A673 (cell line): ENCODE measurements at regions of chr5 and their contacts with region 1.

Region 1: DNA sequence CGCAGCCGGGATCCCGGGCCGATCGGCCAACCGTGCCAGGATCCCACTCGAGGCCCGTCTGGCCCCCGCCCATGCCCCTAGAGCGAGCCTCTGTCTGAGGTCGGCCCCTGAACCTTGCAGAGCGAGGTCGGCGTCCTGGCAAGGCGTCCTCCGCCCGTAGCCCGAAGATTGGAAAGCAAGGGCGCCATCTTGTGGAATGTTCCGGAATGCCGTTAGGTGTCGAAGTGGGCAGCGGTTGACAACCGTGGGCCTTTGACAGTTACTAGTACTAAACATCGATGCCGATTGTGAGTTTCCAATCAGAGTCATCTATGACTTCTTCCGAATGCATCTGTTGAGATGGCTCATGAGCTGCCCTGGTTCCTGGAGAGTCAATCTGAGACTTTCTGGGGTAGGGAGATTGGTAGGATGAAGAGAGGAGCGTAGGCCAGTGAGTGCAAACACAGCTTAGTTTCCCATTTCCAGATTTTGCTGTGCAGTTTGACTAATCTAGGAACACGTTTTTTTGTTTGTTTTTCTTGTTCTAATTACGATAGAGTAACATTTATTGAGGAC is 923 bp upstream of the PLK2 start:
- DNase-seq: peak; percentile 86
- H3K4me3 ChIP-seq: peak overlapping the region; percentile 54
- H3K27ac ChIP-seq: peak overlapping the region; percentile 38
- H3K4me1 ChIP-seq: peaks cover 8% of the 10 kb centered on the region
- H3K27me3 ChIP-seq: peaks cover 24% of the 10 kb centered on the region
- CTCF ChIP-seq: peak; percentile 83

Region 2: DNA sequence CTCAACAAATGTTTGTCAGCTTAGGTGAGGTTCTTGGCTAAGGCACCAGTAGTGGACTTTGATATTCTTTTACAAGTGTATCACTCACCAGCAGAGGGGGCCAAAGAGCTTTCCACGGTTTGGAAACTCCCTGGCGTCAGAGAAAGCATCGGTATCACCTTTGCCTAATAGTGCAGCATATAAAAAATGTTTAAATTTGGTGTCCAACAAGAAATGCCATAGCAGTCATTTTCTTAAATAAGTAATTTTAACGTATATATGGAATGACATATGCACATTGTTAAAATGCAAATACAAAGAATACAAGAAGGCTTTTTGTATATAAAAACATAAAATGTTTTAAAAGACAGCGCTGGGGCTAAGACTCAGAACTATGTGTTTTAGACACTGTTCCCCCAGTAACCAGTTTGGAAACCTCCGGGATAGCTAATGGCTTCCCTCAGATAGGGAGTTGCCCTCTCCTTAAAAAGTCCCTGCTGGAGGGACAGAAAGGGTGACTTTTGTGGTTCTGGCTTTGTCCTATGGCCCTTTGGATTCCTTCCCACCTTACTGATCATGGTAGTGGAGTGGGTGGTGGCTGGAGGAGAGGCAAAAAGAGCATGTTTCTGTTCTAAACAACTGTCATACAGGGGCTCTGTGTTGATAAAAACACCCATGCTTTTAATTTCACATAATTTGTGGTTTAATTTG is 1162.4 kb before region 1 on chr5:
- CTCF ChIA-PET with region 1: interaction called, 6 read pairs
- POLR2A ChIA-PET with region 1: no interaction called
- intact Hi-C with region 1: loop called (anchors 1 kb)
- DNase-seq: peak; percentile 84
- H3K4me3 ChIP-seq: no peak overlapping the region
- H3K27ac ChIP-seq: no peak overlapping the region
- H3K4me1 ChIP-seq: peaks cover 6% of the 10 kb centered on the region
- H3K27me3 ChIP-seq: no peaks in the 10 kb centered on the region
- CTCF ChIP-seq: peak; percentile 79

Region 3: GRCh38 chr5:57499262-57500050 is 961.4 kb before region 1 on chr5:
- CTCF ChIA-PET with region 1: interaction called, 3 read pairs
- POLR2A ChIA-PET with region 1: no interaction called
- intact Hi-C with region 1: loop called (anchors 2 kb)
- DNase-seq: peak; percentile 59
- H3K4me3 ChIP-seq: peak overlapping the region; percentile 19
- H3K27ac ChIP-seq: no peak overlapping the region
- H3K4me1 ChIP-seq: peaks cover 20% of the 10 kb centered on the region
- H3K27me3 ChIP-seq: no peaks in the 10 kb centered on the region
- CTCF ChIP-seq: peak; percentile 76

Region 4: GRCh38 chr5:57650360-57651069 is 810.3 kb before region 1 on chr5:
- CTCF ChIA-PET with region 1: interaction called, 4 read pairs
- POLR2A ChIA-PET with region 1: no interaction called
- intact Hi-C with region 1: loop called (anchors 5 kb)
- DNase-seq: peak; percentile 61
- H3K4me3 ChIP-seq: no peak overlapping the region
- H3K27ac ChIP-seq: no peak overlapping the region
- H3K4me1 ChIP-seq: no peaks in the 10 kb centered on the region
- H3K27me3 ChIP-seq: no peaks in the 10 kb centered on the region
- CTCF ChIP-seq: peak; percentile 81

Region 5: GRCh38 chr5:57887851-57888621 is 572.8 kb before region 1 on chr5:
- CTCF ChIA-PET with region 1: no interaction called
- POLR2A ChIA-PET with region 1: no interaction called
- intact Hi-C with region 1: loop called (anchors 5 kb)
- DNase-seq: peak; percentile 49
- H3K4me3 ChIP-seq: no peak overlapping the region
- H3K27ac ChIP-seq: no peak overlapping the region
- H3K4me1 ChIP-seq: no peaks in the 10 kb centered on the region
- H3K27me3 ChIP-seq: no peaks in the 10 kb centered on the region
- CTCF ChIP-seq: peak; percentile 60